ENCODE measurements at regions of chr11 and their contacts with region 1.

Region 1: GRCh38 chr11:47611348-47611794 is 17.2 kb upstream of the C1QTNF4 start:
- H3K4me3 Mint-ChIP-seq: no peak overlapping the region
- H3K27ac Mint-ChIP-seq: peak overlapping the region; percentile 55
- H3K4me1 Mint-ChIP-seq: peaks cover 30% of the 10 kb centered on the region
- H3K27me3 Mint-ChIP-seq: no peaks in the 10 kb centered on the region

Region 2: GRCh38 chr11:47578524-47579460 is 32.6 kb before region 1 on chr11 and contains the starts of genes KBTBD4 and NDUFS3:
- intact Hi-C with region 1: loop called (anchors 5 kb)
- H3K4me3 Mint-ChIP-seq: peak within 1 kb of the TSS; percentile 90
- H3K27ac Mint-ChIP-seq: peak within 1 kb of the TSS; percentile 93
- H3K4me1 Mint-ChIP-seq: peaks cover 42% of the 10 kb centered on the region
- H3K27me3 Mint-ChIP-seq: no peaks in the 10 kb centered on the region